ENCODE measurements at regions of chr12 and their contacts with region 1.

Region 1: GRCh38 chr12:91778938-91779400 is 366.7 kb downstream of the BTG1 start:
- DNase-seq: peak; percentile 12
- H3K4me3 Mint-ChIP-seq: peak overlapping the region; percentile 59
- H3K27ac Mint-ChIP-seq: peak overlapping the region; percentile 11
- H3K4me1 Mint-ChIP-seq: peaks cover 17% of the 10 kb centered on the region
- H3K27me3 Mint-ChIP-seq: peaks cover 3% of the 10 kb centered on the region

Region 2: GRCh38 chr12:91577586-91578539 is 201.1 kb before region 1 on chr12:
- intact Hi-C with region 1: loop called (anchors 10 kb)
- DNase-seq: no peak
- H3K4me3 Mint-ChIP-seq: peak overlapping the region; percentile 62
- H3K27ac Mint-ChIP-seq: no peak overlapping the region
- H3K4me1 Mint-ChIP-seq: peaks cover 6% of the 10 kb centered on the region
- H3K27me3 Mint-ChIP-seq: peaks cover 15% of the 10 kb centered on the region

Region 3: GRCh38 chr12:91687052-91688017 is 91.6 kb before region 1 on chr12:
- intact Hi-C with region 1: loop called (anchors 5 kb)
- DNase-seq: peak; percentile 2
- H3K4me3 Mint-ChIP-seq: peak overlapping the region; percentile 54
- H3K27ac Mint-ChIP-seq: peak overlapping the region; percentile 83
- H3K4me1 Mint-ChIP-seq: peaks cover 22% of the 10 kb centered on the region
- H3K27me3 Mint-ChIP-seq: no peaks in the 10 kb centered on the region

Region 4: DNA sequence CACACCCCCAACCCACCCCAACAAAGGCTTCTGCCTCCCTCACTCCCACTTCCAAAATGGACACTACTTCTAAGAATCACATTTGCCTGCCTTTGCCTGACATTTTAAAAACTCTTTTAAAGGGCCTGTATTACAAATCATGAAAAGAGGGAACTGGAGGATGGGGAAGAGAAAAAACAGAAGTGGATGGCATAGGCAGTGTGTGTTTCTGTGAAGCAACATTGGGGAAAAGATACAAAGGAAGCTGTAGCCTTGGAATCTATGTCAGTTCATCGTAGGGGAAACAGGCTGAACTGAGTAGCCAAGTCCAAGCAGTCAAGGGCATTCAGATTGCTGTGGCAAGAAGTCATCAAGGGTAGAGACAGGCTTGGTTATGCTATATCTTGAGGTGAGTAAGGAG is 92.8 kb after region 1 on chr12:
- intact Hi-C with region 1: no loop called
- DNase-seq: no peak
- H3K4me3 Mint-ChIP-seq: no peak overlapping the region
- H3K27ac Mint-ChIP-seq: peak overlapping the region; percentile 2
- H3K4me1 Mint-ChIP-seq: peaks cover 48% of the 10 kb centered on the region
- H3K27me3 Mint-ChIP-seq: no peaks in the 10 kb centered on the region

Measured in activated T-helper 1 cell treated with anti-CD3 and anti-CD28 coated beads, Interleukin-12 subunit alpha, Interleukin-12 subunit beta, Interleukin-2, Interleukin-4 antibody, amounts not matched to agents 30 ng/mL and 10 ng/mL and 1 ng/mL, durations not matched to agents 14 hours and 24 hours and 36 hours (primary cell).